Breast epithelium (tissue), 4 donors: ENCODE measurements at regions of chr16 and their contacts with region 1.

Region 1: GRCh38 chr16:75251280-75252048 is at the start of gene BCAR1:
- DNase-seq: peak; percentile 70 to 79
- H3K4me3 ChIP-seq: peak within 1 kb of the TSS; percentile 71 to 88 (median 74)
- H3K27ac ChIP-seq: peak within 1 kb of the TSS; percentile 95 to 98
- H3K4me1 ChIP-seq: peaks cover 48 to 52% of the 10 kb centered on the region in 2 donors
- H3K27me3 ChIP-seq: no peaks in the 10 kb centered on the region
- CTCF ChIP-seq: no peak
- POLR2A ChIP-seq: no peak
- total RNA-seq, gene BCAR1: 13.6 to 38.7 (median 32.9) TPM

Region 2: DNA sequence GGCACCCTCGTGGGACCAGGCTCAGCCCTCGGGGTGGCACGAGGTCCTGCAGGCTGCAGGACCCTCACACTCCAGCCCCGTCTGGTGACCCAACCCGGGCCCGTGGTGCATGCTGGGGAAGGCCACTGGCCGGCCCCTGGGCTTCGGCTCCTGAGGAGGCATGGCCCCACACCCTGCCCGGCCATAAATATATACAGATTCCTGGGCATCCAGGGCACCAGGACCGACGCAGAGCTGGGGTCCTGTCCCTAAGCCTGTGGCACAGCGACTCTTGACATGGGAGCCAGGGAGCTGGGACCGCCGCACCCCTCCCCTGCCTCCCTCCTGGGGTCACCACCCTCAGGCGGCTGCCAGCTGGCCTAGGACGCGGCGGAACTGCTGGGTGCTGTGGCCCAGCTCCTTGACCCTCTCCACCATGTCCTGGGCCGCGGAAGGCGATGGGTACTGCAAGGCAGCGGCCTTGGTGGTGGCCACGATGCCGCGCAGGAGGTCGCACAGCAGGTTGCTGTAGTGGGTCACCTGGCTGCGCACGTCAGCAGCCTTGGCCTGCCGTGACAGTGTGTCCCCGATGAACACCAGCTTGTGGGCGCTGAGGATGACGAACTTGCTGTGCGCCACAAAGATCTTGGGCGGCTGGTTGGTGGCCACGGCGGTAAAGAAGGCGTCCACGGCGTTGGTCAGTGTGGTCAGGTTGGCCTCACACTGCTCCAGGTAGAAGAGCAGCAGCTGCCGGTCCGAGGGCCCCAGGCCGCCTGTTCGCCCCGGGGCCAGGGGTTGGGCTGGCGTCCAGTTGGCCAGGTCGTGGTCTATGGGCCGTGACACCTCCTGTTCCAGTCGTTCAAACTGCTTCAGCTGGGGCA is 22.1 kb before region 1 on chr16:
- intact Hi-C with region 1: loop called (anchors 1 kb)
- DNase-seq: no peak
- H3K4me3 ChIP-seq: no peak overlapping the region
- H3K27ac ChIP-seq: no peak overlapping the region
- H3K4me1 ChIP-seq: peaks cover 0 to 4% of the 10 kb centered on the region in 2 donors
- H3K27me3 ChIP-seq: peaks cover 0 to 8% of the 10 kb centered on the region in 2 donors
- CTCF ChIP-seq: no peak
- POLR2A ChIP-seq: no peak

Region 3: DNA sequence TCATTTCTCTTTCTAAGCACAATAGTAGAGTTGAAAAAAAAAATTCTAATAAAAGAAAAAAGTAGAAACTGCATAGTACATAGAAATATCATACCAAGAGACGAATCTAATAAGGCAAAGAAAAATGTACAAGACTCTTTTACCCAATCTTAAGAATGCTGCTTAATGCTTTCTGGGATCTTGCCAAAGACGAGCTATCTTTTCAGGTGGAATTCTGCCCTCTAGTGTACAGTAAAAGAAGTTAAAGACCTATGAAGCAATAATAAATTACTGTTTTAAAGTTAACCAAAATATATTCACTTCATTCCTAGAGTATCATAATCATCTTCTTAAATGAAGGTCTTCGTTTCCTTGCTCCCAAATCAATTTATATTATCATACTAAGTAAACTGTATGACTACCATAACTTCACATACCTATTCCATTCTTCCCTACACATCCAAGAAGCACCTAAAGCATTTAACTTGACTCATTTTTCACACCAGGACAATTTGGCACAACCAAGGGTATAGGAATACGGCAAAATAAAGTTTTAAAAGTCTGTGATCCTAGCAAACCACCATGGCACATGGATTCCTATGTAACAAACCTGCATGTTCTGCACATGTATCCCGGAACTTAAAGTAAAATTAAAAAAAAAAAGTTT is 134.2 kb after region 1 on chr16:
- intact Hi-C with region 1: loop called (anchors 10 kb)
- DNase-seq: no peak
- H3K4me3 ChIP-seq: no peak overlapping the region
- H3K27ac ChIP-seq: no peak overlapping the region
- H3K4me1 ChIP-seq: no peaks in the 10 kb centered on the region
- H3K27me3 ChIP-seq: no peaks in the 10 kb centered on the region
- CTCF ChIP-seq: peak; percentile 65 to 89 (median 80)
- POLR2A ChIP-seq: no peak